ENCODE measurements at regions of chr11 and their contacts with region 1.

Region 1: DNA sequence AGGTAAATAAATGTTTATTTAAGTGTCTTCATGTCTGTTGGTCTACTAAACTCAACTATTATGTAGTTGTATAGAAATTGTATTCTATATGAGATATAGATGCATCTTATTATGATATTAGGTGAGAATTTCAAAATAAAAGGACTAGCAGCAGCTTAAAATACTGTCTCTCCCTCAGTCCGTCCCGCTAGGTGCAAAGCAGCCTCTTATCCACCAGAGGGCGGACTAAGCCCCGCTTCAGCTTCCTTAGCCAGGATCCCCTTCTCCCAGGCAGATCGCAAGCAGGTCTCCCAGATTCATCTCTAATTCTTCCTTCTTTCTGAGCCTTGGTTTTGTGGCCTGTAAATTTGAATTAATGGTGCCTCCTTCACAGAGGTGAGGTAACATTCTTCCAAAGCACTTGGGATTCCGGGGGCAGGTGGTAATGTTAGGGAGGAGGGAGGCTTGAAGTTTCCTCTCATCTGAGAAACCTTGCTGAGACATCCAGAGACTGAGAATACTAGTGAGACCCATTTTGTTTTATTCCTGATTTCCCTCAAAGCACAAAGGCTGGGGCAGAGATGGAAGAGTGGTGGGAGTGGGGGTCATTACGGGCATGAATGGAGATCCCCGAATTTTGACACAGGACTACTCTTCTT is 13.5 kb upstream of the INSC start:
- DNase-seq: peak; percentile 35 to 67
- ATAC-seq: peak; percentile 63 to 85 (median 73)
- H3K4me3 ChIP-seq: no peak overlapping the region
- H3K4me3 Mint-ChIP-seq: no peak overlapping the region
- H3K27ac ChIP-seq: no peak overlapping the region
- H3K27ac Mint-ChIP-seq: no peak overlapping the region
- H3K4me1 ChIP-seq: peaks cover 4% of the 10 kb centered on the region
- H3K4me1 Mint-ChIP-seq: no peaks in the 10 kb centered on the region
- H3K27me3 ChIP-seq: no peaks in the 10 kb centered on the region
- H3K27me3 Mint-ChIP-seq: peaks cover 11 to 28% of the 10 kb centered on the region in 2 donors
- CTCF ChIP-seq: peak; percentile 90

Region 2: GRCh38 chr11:15208378-15209222 is 107.4 kb after region 1 on chr11:
- intact Hi-C with region 1: loop called (anchors 1 kb)
- DNase-seq: peak; percentile 68 to 83
- ATAC-seq: peak; percentile 79 to 98 (median 89)
- H3K4me3 ChIP-seq: no peak overlapping the region
- H3K4me3 Mint-ChIP-seq: no peak overlapping the region
- H3K27ac ChIP-seq: no peak overlapping the region
- H3K27ac Mint-ChIP-seq: no peak overlapping the region
- H3K4me1 ChIP-seq: no peaks in the 10 kb centered on the region
- H3K4me1 Mint-ChIP-seq: no peaks in the 10 kb centered on the region
- H3K27me3 ChIP-seq: no peaks in the 10 kb centered on the region
- H3K27me3 Mint-ChIP-seq: peaks cover 0 to 14% of the 10 kb centered on the region in 2 donors
- CTCF ChIP-seq: peak; percentile 84